Activated B cell treated with CpG ODN at 0.5 μM for 24 hours (primary cell): ENCODE measurements at regions of chr1 and their contacts with region 1.

Region 1: DNA sequence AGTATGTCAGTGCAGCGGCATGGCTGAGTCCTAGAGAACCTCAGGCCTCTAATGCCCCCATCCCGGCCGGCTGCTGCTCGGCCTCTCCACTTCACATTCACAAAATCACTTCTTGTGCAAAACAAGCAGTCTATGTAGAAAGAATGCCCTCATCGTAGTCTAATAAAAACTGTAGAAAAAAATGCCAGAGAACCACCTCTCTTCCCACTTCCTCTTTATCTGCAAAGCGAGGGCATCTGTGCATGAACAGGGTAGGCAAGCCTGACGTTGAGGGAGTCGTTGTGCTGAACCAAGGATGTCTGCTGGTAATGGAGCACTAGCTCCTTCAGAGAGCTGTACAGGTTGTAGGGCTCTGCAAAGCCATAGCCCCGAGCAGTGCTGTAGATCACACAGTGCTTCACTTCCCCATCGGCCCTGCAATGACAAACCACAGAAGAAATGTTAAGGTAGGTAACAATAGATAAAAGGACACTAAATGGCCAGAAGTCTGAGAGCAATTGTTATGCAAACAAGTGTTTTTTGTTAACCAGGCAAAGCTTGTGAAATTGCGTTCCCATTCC is 88.9 kb downstream of the PIK3R3 start:
- DNase-seq: peak; percentile 36
- ATAC-seq: peak; percentile 100
- H3K4me3 Mint-ChIP-seq: peak overlapping the region; percentile 56
- H3K27ac Mint-ChIP-seq: peak overlapping the region; percentile 80
- H3K4me1 Mint-ChIP-seq: peaks cover 39% of the 10 kb centered on the region
- H3K27me3 Mint-ChIP-seq: no peaks in the 10 kb centered on the region
- CTCF ChIP-seq: no peak

Region 2: GRCh38 chr1:45722809-45723208 is 320.7 kb before region 1 on chr1:
- CTCF ChIA-PET with region 1: no interaction called
- POLR2A ChIA-PET with region 1: no interaction called
- intact Hi-C with region 1: no loop called
- DNase-seq: no peak
- ATAC-seq: no peak
- H3K4me3 Mint-ChIP-seq: no peak overlapping the region
- H3K27ac Mint-ChIP-seq: no peak overlapping the region
- H3K4me1 Mint-ChIP-seq: no peaks in the 10 kb centered on the region
- H3K27me3 Mint-ChIP-seq: no peaks in the 10 kb centered on the region
- CTCF ChIP-seq: no peak

Region 3: GRCh38 chr1:46070164-46070814 is 26.8 kb after region 1 on chr1:
- CTCF ChIA-PET with region 1: no interaction called
- POLR2A ChIA-PET with region 1: no interaction called
- intact Hi-C with region 1: no loop called
- DNase-seq: no peak
- ATAC-seq: no peak
- H3K4me3 Mint-ChIP-seq: no peak overlapping the region
- H3K27ac Mint-ChIP-seq: no peak overlapping the region
- H3K4me1 Mint-ChIP-seq: peaks cover 9% of the 10 kb centered on the region
- H3K27me3 Mint-ChIP-seq: no peaks in the 10 kb centered on the region
- CTCF ChIP-seq: no peak

Region 4: GRCh38 chr1:46113948-46114347 is 70.4 kb after region 1 on chr1:
- CTCF ChIA-PET with region 1: no interaction called
- POLR2A ChIA-PET with region 1: no interaction called
- intact Hi-C with region 1: no loop called
- DNase-seq: no peak
- ATAC-seq: no peak
- H3K4me3 Mint-ChIP-seq: no peak overlapping the region
- H3K27ac Mint-ChIP-seq: no peak overlapping the region
- H3K4me1 Mint-ChIP-seq: no peaks in the 10 kb centered on the region
- H3K27me3 Mint-ChIP-seq: no peaks in the 10 kb centered on the region
- CTCF ChIP-seq: no peak

Region 5: GRCh38 chr1:46132529-46133180 is 89.1 kb after region 1 on chr1 and contains the start of gene PIK3R3:
- CTCF ChIA-PET with region 1: no interaction called
- POLR2A ChIA-PET with region 1: no interaction called
- intact Hi-C with region 1: loop called (anchors 1 kb)
- DNase-seq: peak; percentile 75
- ATAC-seq: peak; percentile 89
- H3K4me3 Mint-ChIP-seq: peak within 1 kb of the TSS; percentile 93
- H3K27ac Mint-ChIP-seq: peak within 1 kb of the TSS; percentile 83
- H3K4me1 Mint-ChIP-seq: peaks cover 25% of the 10 kb centered on the region
- H3K27me3 Mint-ChIP-seq: peaks cover 34% of the 10 kb centered on the region
- CTCF ChIP-seq: no peak
- total RNA-seq, gene PIK3R3: 1.0 and 1.3 TPM in 2 replicates

Region 6: GRCh38 chr1:46340404-46341221 is 297.1 kb after region 1 on chr1 and contains the start of gene NSUN4:
- CTCF ChIA-PET with region 1: no interaction called
- POLR2A ChIA-PET with region 1: no interaction called
- intact Hi-C with region 1: loop called (anchors 2 kb)
- DNase-seq: peak; percentile 69
- ATAC-seq: peak; percentile 81
- H3K4me3 Mint-ChIP-seq: peak within 1 kb of the TSS; percentile 99
- H3K27ac Mint-ChIP-seq: peak within 1 kb of the TSS; percentile 98
- H3K4me1 Mint-ChIP-seq: peaks cover 33% of the 10 kb centered on the region
- H3K27me3 Mint-ChIP-seq: no peaks in the 10 kb centered on the region
- CTCF ChIP-seq: peak; percentile 50
- total RNA-seq, gene NSUN4: 35.3 and 38.6 TPM in 2 replicates

Region 7: GRCh38 chr1:46352363-46352762 is 308.8 kb after region 1 on chr1:
- CTCF ChIA-PET with region 1: no interaction called
- POLR2A ChIA-PET with region 1: no interaction called
- intact Hi-C with region 1: no loop called
- DNase-seq: no peak
- ATAC-seq: no peak
- H3K4me3 Mint-ChIP-seq: no peak overlapping the region
- H3K27ac Mint-ChIP-seq: no peak overlapping the region
- H3K4me1 Mint-ChIP-seq: peaks cover 5% of the 10 kb centered on the region
- H3K27me3 Mint-ChIP-seq: no peaks in the 10 kb centered on the region
- CTCF ChIP-seq: no peak